ENCODE measurements at regions of chr19 and their contacts with region 1.

Region 1: DNA sequence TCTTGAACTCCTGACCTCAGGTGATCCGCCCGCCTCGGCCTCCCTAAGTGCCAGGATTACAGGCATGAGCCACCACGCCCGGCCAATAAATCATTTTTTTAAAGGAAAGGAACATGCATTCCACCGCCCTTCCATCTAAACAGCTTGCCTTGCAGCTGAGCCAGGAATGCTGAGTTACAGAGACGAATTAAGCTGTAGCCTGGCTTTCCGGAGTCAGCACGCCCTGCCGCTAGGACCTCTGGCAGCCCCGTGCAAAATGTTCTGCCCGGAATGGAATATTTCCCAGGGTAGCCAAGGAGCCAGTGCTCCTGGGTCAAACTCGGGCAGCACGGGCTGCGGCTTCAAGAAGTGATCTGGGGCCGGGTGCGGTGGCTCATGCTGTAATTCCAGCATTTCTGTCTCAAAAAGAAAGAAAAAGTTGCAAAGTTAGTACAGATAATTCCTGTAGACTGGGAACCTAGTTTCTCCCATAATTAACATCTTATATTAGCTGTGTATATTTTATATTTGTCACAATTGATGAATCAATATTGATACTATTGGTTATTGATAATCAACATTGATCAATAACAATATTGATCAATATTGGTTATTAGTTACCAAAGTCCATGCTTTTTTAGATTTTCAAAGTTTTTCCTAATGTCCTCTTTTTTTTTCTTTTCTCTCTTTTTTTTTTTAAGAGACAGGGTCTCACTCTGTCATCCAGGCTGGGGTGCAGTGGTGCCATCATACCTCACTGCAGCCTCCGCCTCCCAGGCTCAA is 19.2 kb downstream of the ATCAY start:
- DNase-seq: no peak
- H3K4me3 ChIP-seq: no peak overlapping the region
- H3K27ac ChIP-seq: no peak overlapping the region
- H3K4me1 ChIP-seq: no peaks in the 10 kb centered on the region
- H3K27me3 ChIP-seq: peaks cover 30% of the 10 kb centered on the region
- CTCF ChIP-seq: no peak

Region 2: DNA sequence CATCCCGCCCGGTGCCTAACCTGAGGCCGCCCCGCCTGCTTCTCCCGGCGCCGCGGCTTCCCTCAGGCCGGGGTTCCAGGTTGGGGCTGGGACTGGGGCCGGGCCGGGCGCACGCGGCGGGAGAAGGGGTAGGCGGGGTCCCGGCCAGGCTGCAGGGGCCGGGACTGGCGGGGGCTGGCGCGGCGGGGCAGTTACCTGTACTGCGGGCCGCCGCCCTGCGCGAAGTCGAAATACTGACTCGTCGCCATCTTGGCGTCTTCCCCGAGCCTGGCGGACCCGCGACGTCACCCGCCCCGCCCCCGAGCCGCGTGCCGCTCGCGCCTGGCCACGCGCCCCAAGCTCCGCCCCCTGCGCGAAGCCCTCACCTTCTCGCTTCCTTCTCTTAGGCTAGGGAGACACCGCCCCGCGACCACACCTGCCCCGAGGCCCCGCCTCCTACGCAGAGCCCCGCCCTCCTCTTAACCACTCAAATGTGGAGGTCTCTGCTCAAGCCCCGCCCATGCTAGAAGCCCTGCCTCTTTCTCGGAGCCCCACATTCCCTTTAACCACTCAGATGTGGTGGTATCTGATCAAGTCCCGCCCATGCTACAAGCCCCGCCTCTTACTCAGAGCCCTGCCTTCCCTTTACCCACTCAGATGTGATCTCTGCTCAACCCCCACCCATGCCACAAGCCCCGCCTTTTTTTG is 30.8 kb before region 1 on chr19 and contains the start of gene ZFR2:
- CTCF ChIA-PET with region 1: interaction called, 29 read pairs
- POLR2A ChIA-PET with region 1: no interaction called
- intact Hi-C with region 1: no loop called
- DNase-seq: no peak
- H3K4me3 ChIP-seq: no peak within 1 kb of the TSS
- H3K27ac ChIP-seq: no peak within 1 kb of the TSS
- H3K4me1 ChIP-seq: no peaks in the 10 kb centered on the region
- H3K27me3 ChIP-seq: peaks cover 49% of the 10 kb centered on the region
- CTCF ChIP-seq: no peak
- total RNA-seq, gene ZFR2: not detected in 2 replicates

Region 3: GRCh38 chr19:3880471-3881271 is 19.0 kb before region 1 on chr19 and contains the start of gene ATCAY:
- CTCF ChIA-PET with region 1: interaction called, 19 read pairs
- POLR2A ChIA-PET with region 1: no interaction called
- intact Hi-C with region 1: no loop called
- DNase-seq: no peak
- H3K4me3 ChIP-seq: no peak within 1 kb of the TSS
- H3K27ac ChIP-seq: no peak within 1 kb of the TSS
- H3K4me1 ChIP-seq: no peaks in the 10 kb centered on the region
- H3K27me3 ChIP-seq: no peaks in the 10 kb centered on the region
- CTCF ChIP-seq: no peak
- total RNA-seq, gene ATCAY: not detected in 2 replicates

Region 4: DNA sequence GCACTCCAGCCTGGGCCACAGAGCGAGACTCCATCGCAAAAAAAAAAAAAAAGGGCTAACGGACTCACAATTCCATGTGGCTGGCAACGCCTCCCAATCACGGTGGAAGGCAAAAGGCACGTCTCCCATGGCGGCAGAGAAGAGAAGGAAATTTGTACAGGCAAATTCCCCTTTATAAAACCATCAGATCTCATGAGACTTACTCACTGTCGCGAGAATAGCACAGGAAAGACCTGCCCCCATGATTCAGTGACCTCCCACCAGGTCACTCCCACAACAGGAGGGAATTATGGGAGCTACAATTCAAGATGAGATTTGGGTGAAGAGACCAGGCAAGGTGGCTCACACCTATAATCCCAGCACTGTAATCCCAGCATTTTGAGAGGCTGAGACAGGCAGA is 14.5 kb after region 1 on chr19:
- CTCF ChIA-PET with region 1: interaction called, 12 read pairs
- POLR2A ChIA-PET with region 1: no interaction called
- intact Hi-C with region 1: no loop called
- DNase-seq: no peak
- H3K4me3 ChIP-seq: no peak overlapping the region
- H3K27ac ChIP-seq: no peak overlapping the region
- H3K4me1 ChIP-seq: no peaks in the 10 kb centered on the region
- H3K27me3 ChIP-seq: peaks cover 4% of the 10 kb centered on the region; the same call in 1 of the 2 replicates
- CTCF ChIP-seq: no peak

Region 5: DNA sequence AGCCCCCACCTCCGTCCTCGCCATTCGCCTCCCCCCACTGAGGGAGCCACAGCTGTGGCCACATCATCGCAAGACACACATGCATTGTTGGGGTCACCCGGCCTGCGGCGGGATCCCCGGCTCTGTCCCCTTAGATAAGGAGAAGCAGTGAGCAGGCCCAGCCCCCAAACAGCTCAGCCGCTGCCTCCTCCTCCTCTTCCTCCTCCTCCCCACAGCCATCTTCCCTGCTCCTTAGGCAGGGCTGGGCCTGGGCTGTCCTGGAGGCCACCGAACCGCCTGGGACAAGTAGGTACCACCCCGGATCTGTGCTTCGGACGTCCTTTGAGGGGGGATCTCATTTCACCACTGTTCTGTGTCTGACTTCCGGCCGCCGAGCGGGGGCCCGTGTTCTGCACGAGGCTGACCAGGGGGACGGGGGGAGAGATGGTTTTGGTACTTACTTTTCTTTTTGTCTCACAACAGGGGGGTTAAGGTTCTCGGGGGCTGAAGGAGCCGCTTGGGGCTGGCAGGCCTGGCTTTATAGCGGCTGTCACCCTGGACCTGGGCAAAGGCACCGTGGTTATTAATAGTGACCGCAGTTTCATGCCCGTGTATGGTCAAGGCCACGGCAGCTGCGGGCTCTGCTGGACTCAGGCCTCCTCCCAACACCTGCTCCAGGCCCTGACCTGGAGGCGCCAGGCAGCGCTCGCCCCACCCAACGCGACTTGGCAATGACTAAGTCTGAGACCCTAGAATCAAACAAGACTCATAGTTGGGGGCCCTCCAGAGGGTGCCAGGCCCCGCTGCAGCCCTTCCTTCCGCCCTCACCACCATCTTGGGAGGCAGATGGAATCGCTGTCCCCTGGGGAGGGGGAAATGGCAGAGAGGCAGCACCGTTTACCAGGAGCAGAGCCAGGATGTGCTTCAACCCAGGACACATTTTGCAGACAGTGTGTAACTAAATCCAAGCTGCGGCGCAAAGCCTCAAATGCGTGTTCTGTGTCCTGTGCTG is 51.5 kb after region 1 on chr19:
- CTCF ChIA-PET with region 1: no interaction called
- POLR2A ChIA-PET with region 1: no interaction called
- intact Hi-C with region 1: no loop called
- DNase-seq: no peak
- H3K4me3 ChIP-seq: no peak overlapping the region
- H3K27ac ChIP-seq: no peak overlapping the region
- H3K4me1 ChIP-seq: no peaks in the 10 kb centered on the region
- H3K27me3 ChIP-seq: no peaks in the 10 kb centered on the region
- CTCF ChIP-seq: no peak

Measured in PC-9 (cell line).